Caco-2 (cell line): ENCODE measurements at regions of chr22 and their contacts with region 1.

Region 1: DNA sequence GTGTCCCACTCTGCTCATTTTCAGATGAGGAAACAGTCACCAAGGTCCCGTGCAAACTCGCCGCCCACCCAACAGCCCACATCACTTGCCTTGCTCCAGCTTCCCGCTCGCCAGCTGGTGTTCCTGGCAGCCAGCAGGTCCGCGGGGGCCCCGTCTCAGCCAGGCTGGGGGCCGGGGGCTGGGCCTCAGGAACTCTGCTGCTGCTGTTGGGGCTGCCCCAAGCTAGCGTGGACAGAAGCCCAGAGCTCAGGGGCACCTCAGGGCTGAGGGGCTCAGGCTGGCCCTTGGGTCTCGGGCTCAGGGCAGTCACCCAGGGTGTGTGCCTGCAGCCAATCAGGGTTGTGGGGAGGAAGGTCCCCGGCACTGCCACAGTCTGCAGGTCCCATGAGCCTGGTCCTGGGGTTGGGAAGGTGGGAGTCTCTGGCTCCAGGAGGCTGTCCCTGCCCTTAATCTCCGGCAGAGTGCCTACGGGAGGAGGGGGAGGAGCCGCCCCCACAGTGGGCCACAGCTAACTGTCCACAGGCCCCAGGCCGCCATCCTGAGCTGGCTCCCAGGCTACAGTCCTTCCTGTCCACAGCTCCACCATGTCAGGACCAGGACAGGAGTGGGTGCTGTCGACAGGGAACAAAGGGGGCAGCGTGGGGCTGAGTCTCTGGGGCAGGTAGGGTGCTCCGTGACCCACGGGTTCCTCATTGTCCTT is 65.2 kb downstream of the ARFGAP3 start:
- DNase-seq: no peak
- H3K4me3 ChIP-seq: no peak overlapping the region
- H3K4me3 Mint-ChIP-seq: no peak overlapping the region
- H3K27ac Mint-ChIP-seq: no peak overlapping the region
- H3K4me1 ChIP-seq: no peaks in the 10 kb centered on the region
- H3K4me1 Mint-ChIP-seq: no peaks in the 10 kb centered on the region
- H3K27me3 ChIP-seq: no peaks in the 10 kb centered on the region
- H3K27me3 Mint-ChIP-seq: no peaks in the 10 kb centered on the region
- CTCF ChIP-seq: no peak

Region 2: GRCh38 chr22:42747701-42748513 is 44.0 kb before region 1 on chr22:
- CTCF ChIA-PET with region 1: no interaction called
- POLR2A ChIA-PET with region 1: no interaction called
- intact Hi-C with region 1: no loop called
- DNase-seq: no peak
- H3K4me3 ChIP-seq: no peak overlapping the region
- H3K4me3 Mint-ChIP-seq: no peak overlapping the region
- H3K27ac Mint-ChIP-seq: no peak overlapping the region
- H3K4me1 ChIP-seq: peaks cover 23% of the 10 kb centered on the region
- H3K4me1 Mint-ChIP-seq: peaks cover 6% of the 10 kb centered on the region
- H3K27me3 ChIP-seq: no peaks in the 10 kb centered on the region
- H3K27me3 Mint-ChIP-seq: no peaks in the 10 kb centered on the region
- CTCF ChIP-seq: no peak

Region 3: DNA sequence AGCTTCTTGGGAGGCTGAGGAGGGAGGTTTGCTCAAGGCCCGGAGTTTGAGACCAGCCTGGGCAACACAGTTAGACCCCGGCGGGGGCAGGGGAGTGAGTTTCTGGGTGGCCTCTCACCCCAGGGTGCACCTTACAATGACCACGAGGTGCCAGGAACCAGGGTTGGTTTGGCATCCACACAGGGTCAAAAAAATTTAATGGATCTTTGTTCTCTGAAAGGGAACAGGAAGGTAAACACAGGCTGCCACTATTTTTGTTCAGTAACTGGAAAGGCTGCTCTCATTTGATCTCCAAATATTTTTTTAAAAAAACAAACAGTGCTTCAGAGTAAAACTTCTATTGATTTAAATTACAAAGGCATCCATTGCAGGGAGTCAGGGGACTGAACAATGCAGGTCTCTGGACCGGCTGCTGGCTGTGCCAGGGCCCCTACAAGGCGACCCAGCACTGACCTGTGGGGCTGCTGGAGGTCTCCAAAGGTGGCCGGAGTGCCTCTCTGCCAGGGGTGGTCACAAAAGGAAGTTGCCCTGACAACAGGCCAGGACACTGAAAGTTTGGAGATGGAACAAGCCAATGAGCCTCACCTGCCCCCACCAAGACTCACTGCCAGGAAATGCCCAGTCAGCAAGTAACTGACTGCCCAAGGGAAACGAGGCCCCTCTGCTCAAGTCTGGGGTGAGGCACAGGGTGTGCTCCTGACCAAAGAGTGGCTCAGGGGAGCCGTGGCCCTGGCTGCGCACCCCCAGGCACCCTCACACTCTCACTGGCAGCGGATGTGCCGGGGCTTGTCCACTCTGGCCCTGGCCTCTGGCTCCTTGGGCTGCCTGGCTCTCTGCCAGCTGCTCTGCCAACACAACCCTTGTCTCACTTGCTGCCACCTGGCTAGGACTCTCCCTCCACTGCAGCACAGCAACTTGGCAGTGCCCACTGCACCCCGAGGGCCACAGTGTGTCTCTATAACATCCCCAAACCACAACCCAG is 13.4 kb after region 1 on chr22:
- CTCF ChIA-PET with region 1: no interaction called
- POLR2A ChIA-PET with region 1: no interaction called
- intact Hi-C with region 1: no loop called
- DNase-seq: no peak
- H3K4me3 ChIP-seq: no peak overlapping the region
- H3K4me3 Mint-ChIP-seq: no peak overlapping the region
- H3K27ac Mint-ChIP-seq: peak overlapping the region; percentile 42
- H3K4me1 ChIP-seq: no peaks in the 10 kb centered on the region
- H3K4me1 Mint-ChIP-seq: no peaks in the 10 kb centered on the region
- H3K27me3 ChIP-seq: no peaks in the 10 kb centered on the region
- H3K27me3 Mint-ChIP-seq: no peaks in the 10 kb centered on the region
- CTCF ChIP-seq: no peak

Region 4: DNA sequence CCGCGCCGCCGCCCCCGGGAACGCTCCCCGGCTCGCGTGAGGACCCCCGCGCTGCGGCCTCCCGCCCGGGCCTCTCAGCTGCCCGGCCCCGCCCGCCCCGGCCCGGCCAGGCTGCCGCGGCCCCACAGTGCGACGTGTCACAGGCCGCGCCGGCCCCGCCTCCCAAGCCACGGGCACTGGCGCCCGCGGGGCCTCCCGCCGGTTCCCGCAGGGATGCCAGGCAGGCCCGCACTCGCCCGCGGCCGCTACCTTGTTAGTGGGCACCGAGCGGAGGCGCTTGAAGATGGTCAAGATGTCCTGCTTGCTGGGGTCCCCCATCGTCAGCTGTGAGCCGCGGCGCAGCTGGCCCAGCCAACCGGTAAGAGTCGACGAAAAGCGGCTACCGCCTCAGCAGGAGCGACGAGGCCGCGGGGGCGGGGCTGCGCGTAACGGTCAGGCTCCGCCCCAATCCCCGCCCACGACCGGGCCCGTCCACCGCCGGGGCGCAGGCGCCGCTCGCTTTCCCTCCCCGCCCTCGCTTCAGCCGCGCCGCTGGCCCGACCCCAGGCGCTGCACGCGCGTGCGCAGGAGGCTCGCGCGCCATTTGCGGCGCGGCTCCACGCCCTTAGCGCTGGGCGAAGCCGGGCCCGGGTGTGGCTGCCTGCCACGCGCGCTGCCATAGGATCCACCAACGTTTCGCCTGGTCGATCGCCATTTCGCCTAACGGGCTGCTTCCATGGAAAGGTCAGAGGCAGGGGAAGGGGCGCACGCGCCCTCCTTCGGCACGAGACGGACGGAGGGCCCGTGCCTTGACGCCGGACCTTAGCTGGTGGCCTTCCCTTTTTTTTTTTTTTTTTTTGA is 65.2 kb after region 1 on chr22 and contains the start of gene ARFGAP3:
- CTCF ChIA-PET with region 1: no interaction called
- POLR2A ChIA-PET with region 1: no interaction called
- intact Hi-C with region 1: no loop called
- DNase-seq: peak; percentile 88 to 98
- H3K4me3 ChIP-seq: peak within 1 kb of the TSS; percentile 92
- H3K4me3 Mint-ChIP-seq: peak within 1 kb of the TSS; percentile 91
- H3K27ac Mint-ChIP-seq: peak within 1 kb of the TSS; percentile 94
- H3K4me1 ChIP-seq: peaks cover 11% of the 10 kb centered on the region
- H3K4me1 Mint-ChIP-seq: peaks cover 4% of the 10 kb centered on the region
- H3K27me3 ChIP-seq: no peaks in the 10 kb centered on the region
- H3K27me3 Mint-ChIP-seq: no peaks in the 10 kb centered on the region
- CTCF ChIP-seq: no peak
- total RNA-seq, gene ARFGAP3: 32.1 and 37.4 TPM in 2 replicates

Region 5: DNA sequence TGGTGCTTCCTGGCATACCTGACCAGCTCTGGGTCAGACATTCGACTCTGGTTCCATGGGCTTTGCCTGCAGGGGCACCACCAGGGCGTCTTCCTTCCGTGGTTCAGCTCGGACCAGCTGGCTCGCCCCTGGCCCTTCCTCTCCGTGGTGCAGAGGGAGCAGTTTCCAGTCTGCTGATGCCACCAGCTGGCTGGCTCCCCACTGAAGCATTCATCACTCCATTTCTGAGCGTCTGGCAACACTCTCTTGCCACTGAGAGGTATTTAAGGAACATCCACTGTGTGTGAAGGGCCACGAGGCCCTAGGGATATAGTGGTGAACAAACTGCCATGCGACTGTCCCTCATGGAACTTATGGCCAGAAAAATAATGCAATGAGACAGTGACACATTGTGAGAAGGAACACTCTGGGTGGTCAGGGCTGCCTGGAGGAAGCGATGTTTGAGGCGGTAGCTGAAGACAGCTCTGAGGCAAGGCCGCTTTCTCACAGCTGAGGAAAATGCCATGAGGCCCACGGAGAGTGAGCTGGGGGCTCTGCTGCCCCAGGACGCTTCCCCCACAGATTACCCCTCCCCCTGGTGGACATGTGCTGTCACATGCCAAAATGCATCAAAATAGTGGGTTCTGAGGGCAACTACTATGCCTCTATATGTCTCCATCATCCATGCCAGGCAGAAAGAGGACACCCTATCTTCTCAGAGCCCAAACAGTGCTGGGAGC is 110.1 kb after region 1 on chr22:
- CTCF ChIA-PET with region 1: no interaction called
- POLR2A ChIA-PET with region 1: interaction called, 10 read pairs
- intact Hi-C with region 1: no loop called
- DNase-seq: no peak
- H3K4me3 ChIP-seq: no peak overlapping the region
- H3K4me3 Mint-ChIP-seq: no peak overlapping the region
- H3K27ac Mint-ChIP-seq: no peak overlapping the region
- H3K4me1 ChIP-seq: no peaks in the 10 kb centered on the region
- H3K4me1 Mint-ChIP-seq: peaks cover 13% of the 10 kb centered on the region
- H3K27me3 ChIP-seq: no peaks in the 10 kb centered on the region
- H3K27me3 Mint-ChIP-seq: no peaks in the 10 kb centered on the region
- CTCF ChIP-seq: peak; percentile 23 to 28

Region 6: GRCh38 chr22:43100211-43100610 is 308.3 kb after region 1 on chr22:
- CTCF ChIA-PET with region 1: no interaction called
- POLR2A ChIA-PET with region 1: no interaction called
- intact Hi-C with region 1: no loop called
- DNase-seq: peak; percentile 56 to 73
- H3K4me3 ChIP-seq: no peak overlapping the region
- H3K4me3 Mint-ChIP-seq: no peak overlapping the region
- H3K27ac Mint-ChIP-seq: peak overlapping the region; percentile 67
- H3K4me1 ChIP-seq: peaks cover 49% of the 10 kb centered on the region
- H3K4me1 Mint-ChIP-seq: peaks cover 21% of the 10 kb centered on the region
- H3K27me3 ChIP-seq: no peaks in the 10 kb centered on the region
- H3K27me3 Mint-ChIP-seq: no peaks in the 10 kb centered on the region
- CTCF ChIP-seq: no peak